Activated CD4-positive, alpha-beta memory T cell treated with anti-CD3 and anti-CD28 coated beads, Interleukin-2, amount 10 ng/mL, durations not matched to agents 7 days and 5 days (primary cell): ENCODE measurements at regions of chr7 and their contacts with region 1.

Region 1: GRCh38 chr7:100563809-100564400 is 9.8 kb downstream of the SAP25 start:
- DNase-seq: peak; percentile 83
- H3K4me3 Mint-ChIP-seq: no peak overlapping the region
- H3K27ac Mint-ChIP-seq: peak overlapping the region; percentile 49
- H3K4me1 Mint-ChIP-seq: peaks cover 28% of the 10 kb centered on the region
- H3K27me3 Mint-ChIP-seq: no peaks in the 10 kb centered on the region

Region 2: GRCh38 chr7:100478966-100479665 is 84.8 kb before region 1 on chr7 and contains the start of gene TSC22D4:
- CTCF ChIA-PET with region 1: interaction called, 12 read pairs
- POLR2A ChIA-PET with region 1: interaction called, 6 read pairs
- DNase-seq: peak; percentile 91
- H3K4me3 Mint-ChIP-seq: peak within 1 kb of the TSS; percentile 99
- H3K27ac Mint-ChIP-seq: peak within 1 kb of the TSS; percentile 93
- H3K4me1 Mint-ChIP-seq: peaks cover 40% of the 10 kb centered on the region
- H3K27me3 Mint-ChIP-seq: no peaks in the 10 kb centered on the region
- total RNA-seq, gene TSC22D4: 133 to 136 TPM

Region 3: GRCh38 chr7:100532165-100533022 is 31.5 kb before region 1 on chr7:
- CTCF ChIA-PET with region 1: interaction called, 12 read pairs
- POLR2A ChIA-PET with region 1: interaction called, 5 read pairs
- DNase-seq: no peak
- H3K4me3 Mint-ChIP-seq: no peak overlapping the region
- H3K27ac Mint-ChIP-seq: no peak overlapping the region
- H3K4me1 Mint-ChIP-seq: peaks cover 8% of the 10 kb centered on the region
- H3K27me3 Mint-ChIP-seq: no peaks in the 10 kb centered on the region

Region 4: DNA sequence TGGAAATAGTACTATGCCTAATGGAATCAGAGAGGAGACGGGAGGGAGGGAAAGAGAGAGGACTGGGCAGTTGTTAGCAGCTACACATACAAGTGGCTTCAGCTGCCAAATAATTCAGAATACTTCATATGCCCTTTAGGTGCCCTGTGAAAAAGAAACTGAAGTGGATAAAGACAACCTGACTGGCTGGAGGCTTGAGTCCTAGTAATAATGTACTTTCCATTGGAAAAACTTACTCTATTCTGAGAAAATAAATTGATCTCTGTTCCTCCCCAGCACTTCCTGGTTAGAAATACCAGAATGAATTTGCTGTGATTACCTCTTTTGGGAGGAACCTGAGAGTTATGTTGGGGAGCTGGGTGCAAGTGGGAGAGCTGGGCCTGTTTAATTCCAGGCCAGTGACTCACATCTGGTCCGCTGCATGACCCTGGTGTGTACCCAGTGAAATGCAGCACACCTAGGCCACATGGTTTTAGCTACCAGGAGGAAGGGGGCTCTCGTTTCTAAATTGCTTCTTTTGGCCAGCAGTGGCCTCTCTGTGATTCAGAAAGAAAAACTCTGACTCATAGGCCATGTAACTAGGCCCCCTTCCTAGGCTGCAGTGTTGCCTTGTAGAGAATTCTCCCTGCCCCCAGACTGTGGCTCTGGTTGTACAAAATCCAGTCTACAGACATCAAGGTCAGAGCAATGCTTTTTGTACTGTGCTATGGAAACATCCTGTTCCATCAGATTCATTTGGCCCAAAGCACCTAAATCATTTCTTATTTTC is 18.4 kb before region 1 on chr7:
- CTCF ChIA-PET with region 1: interaction called, 144 read pairs
- POLR2A ChIA-PET with region 1: interaction called, 12 read pairs
- DNase-seq: peak; percentile 59
- H3K4me3 Mint-ChIP-seq: peak overlapping the region; percentile 97
- H3K27ac Mint-ChIP-seq: peak overlapping the region; percentile 96
- H3K4me1 Mint-ChIP-seq: peaks cover 96% of the 10 kb centered on the region
- H3K27me3 Mint-ChIP-seq: no peaks in the 10 kb centered on the region